ENCODE measurements at regions of chr13 and their contacts with region 1.

Region 1: DNA sequence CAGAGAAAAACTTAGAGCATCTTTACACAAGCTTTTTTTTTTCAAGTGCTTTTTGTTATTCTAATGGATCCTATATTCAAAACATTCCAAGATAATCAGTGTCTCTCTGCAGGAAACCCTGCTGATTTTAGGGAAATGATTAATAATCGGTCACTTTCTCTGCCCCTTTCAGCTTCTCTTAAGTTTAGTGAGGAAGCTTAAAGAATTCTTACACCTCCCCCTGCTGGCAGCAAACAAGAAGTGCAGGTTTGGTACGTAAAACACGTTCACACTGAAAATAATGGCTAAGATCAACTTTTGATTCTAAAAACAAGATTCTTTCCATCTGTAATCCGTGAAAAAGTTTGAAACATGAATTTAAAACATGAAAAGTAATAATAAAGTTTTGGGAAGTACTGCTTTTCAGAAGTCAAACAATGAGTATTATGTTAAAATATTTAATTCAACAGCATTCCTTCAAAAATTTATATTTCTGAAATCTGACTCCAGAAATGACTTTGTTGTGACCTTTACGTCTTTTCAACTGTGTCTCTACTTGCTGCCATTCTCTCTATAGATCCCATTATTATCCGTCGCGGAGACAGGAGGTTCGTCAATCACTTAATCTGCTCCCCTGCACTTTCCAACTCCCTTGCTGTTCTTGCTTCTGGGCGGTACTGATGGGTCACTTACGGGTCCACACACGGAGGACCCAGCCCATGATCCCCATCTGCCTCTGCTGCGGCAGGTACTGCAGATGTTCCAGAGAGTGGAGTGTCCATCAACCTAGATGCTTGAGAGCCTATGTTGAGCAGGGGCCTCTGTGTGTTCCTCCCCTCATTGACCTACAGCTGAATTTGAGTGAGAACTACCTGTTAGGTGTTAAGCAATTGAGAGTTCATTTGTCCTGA is 203.1 kb upstream of the EDNRB start:
- DNase-seq: peak in 3 of 6 donors; percentile 17 to 36 (median 26)
- ATAC-seq: peak in 3 of 4 donors; percentile 67 to 82 (median 77)
- H3K4me3 ChIP-seq: no peak overlapping the region
- H3K27ac ChIP-seq: no peak overlapping the region
- H3K4me1 ChIP-seq: peaks cover 0 to 8% (median 0%) of the 10 kb centered on the region in 3 donors
- H3K27me3 ChIP-seq: no peaks in the 10 kb centered on the region
- CTCF ChIP-seq: peak; percentile 54 to 83 (median 66)

Region 2: GRCh38 chr13:77285098-77285497 is 836.6 kb before region 1 on chr13:
- intact Hi-C with region 1: no loop called
- DNase-seq: no peak
- ATAC-seq: no peak
- H3K4me3 ChIP-seq: no peak overlapping the region
- H3K27ac ChIP-seq: no peak overlapping the region
- H3K4me1 ChIP-seq: peaks cover 0 to 7% (median 0%) of the 10 kb centered on the region in 3 donors
- H3K27me3 ChIP-seq: no peaks in the 10 kb centered on the region
- CTCF ChIP-seq: no peak

Region 3: DNA sequence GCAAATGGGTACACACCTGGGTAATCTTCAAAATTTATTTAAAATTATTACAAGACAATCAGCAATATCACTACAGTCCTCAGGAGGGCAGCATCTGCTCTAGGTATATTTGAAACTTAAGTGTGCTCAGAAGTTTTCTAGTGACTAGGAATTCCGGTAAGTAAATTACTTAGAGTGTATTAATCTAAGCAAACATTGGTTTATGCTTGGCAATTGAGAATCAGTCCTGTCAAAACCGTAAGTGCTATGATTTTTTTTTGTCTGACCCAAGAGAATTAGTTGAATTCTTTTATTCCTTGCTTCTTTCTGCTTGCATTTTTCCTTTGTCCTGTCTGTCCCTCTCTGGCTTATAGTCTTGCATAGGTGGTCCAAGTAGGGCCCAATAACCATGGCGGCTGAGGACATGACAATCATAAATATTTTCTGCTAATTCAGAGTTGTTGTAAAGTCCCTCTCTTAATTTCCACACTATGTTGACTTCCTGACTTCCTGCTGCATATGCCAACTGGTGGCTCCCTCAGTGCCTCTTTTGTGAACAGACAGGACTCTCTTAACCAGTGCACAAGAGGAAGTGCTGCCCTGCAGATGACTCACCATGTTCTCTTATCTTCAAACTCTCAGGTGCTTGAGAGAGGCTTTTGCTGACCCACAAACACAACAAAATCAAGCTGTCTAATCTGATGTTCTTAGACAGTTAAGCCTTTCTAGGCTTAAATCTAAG is 342.0 kb before region 1 on chr13:
- intact Hi-C with region 1: loop called in 1 of 3 experiments (anchors 10 kb)
- DNase-seq: peak in 2 of 6 donors; percentile 24 to 31
- ATAC-seq: peak; percentile 82 to 94 (median 90)
- H3K4me3 ChIP-seq: no peak overlapping the region
- H3K27ac ChIP-seq: peak overlapping the region in 1 of 4 donors; percentile 39
- H3K4me1 ChIP-seq: peaks cover 0 to 8% (median 0%) of the 10 kb centered on the region in 3 donors
- H3K27me3 ChIP-seq: no peaks in the 10 kb centered on the region
- CTCF ChIP-seq: peak; percentile 14 to 38 (median 30)

Region 4: DNA sequence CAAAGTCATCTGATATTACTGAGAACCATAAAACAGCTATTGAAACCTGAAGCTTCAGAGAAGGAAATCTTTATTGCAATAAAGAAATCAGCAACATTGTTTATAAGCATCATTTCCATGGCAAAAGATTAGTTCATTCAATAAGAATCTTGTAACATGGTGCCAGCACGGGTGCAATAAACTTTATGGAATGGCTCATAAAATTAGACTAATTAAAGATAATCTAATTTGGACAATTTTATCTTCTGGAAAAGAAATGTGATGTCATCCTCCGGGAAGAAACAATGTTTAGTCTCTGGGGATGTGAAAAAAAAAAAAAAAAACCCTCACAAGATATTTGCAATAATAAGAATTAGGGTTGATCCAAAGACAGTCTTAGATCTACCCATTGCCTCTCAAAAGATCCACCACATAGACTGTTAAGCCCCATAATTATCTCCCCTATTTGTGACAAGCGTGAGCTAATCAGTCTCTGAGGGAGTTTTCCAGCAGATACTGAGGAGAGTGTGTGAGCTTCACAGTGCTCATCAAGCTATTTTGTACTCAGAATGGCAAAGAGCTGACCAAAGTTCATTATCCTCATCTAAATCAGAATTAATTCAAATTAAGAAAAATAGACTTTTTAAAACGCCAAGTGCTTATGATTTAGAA is 93.9 kb after region 1 on chr13:
- intact Hi-C with region 1: no loop called
- DNase-seq: no peak
- ATAC-seq: no peak
- H3K4me3 ChIP-seq: no peak overlapping the region
- H3K27ac ChIP-seq: no peak overlapping the region
- H3K4me1 ChIP-seq: no peaks in the 10 kb centered on the region
- H3K27me3 ChIP-seq: no peaks in the 10 kb centered on the region
- CTCF ChIP-seq: no peak

Measured in pancreas (tissue), 10 donors.